ENCODE measurements at regions of chr2 and their contacts with region 1.

Region 1: DNA sequence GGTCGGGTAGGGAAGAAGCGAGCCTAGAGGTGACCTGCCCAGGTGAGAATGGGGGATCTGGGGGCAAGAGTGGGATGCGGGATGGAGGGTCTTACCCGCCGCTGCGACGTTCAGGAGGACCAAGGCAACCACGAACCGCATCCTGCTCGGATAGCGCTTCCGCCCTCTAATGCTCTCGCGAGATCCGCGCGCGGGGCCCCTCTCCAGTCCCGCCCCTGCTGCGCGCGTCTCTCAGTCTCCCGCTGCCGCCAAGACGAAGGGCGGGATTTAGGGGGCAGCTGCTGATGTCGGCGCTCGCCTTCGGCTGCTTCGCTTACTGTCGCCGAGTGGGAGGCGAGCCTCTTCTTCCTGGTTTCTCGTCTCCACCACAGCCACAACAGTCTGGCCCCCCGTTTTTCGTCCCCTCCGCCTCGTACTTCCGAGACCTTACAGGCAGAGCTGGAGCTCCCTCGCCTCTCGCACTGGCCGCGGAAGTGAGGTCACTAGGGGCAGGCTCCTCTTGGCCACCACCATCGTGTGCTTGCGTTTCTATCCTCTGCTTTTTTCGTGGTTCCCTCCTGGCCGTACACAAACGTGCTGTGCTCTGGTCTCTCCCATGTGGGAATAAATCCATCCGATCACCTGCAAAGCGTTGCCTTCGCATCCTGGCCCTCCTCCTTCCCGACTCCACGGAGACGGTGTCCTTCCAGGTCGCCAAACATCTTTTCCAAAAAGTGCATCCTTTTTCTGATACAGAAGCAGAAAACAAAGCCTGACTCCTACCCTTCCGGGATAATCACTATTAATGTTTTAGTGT is at the start of gene TGOLN2:
- DNase-seq: peak; percentile 95
- H3K4me3 Mint-ChIP-seq: peak within 1 kb of the TSS; percentile 98
- H3K27ac Mint-ChIP-seq: peak within 1 kb of the TSS; percentile 99
- H3K4me1 Mint-ChIP-seq: peaks cover 40% of the 10 kb centered on the region
- H3K27me3 Mint-ChIP-seq: no peaks in the 10 kb centered on the region
- total RNA-seq, gene TGOLN2: 84.8 to 85.9 TPM

Region 2: GRCh38 chr2:84939426-84940087 is 388.5 kb before region 1 on chr2:
- CTCF ChIA-PET with region 1: no interaction called
- POLR2A ChIA-PET with region 1: interaction called, 12 read pairs
- intact Hi-C with region 1: loop called (anchors 2 kb)
- DNase-seq: peak; percentile 87
- H3K4me3 Mint-ChIP-seq: peak overlapping the region; percentile 62
- H3K27ac Mint-ChIP-seq: peak overlapping the region; percentile 93
- H3K4me1 Mint-ChIP-seq: peaks cover 66% of the 10 kb centered on the region
- H3K27me3 Mint-ChIP-seq: no peaks in the 10 kb centered on the region

Region 3: GRCh38 chr2:85278361-85278760 is 49.7 kb before region 1 on chr2:
- CTCF ChIA-PET with region 1: no interaction called
- POLR2A ChIA-PET with region 1: no interaction called
- intact Hi-C with region 1: no loop called
- DNase-seq: no peak
- H3K4me3 Mint-ChIP-seq: no peak overlapping the region
- H3K27ac Mint-ChIP-seq: no peak overlapping the region
- H3K4me1 Mint-ChIP-seq: no peaks in the 10 kb centered on the region
- H3K27me3 Mint-ChIP-seq: no peaks in the 10 kb centered on the region

Region 4: GRCh38 chr2:85308896-85309555 is 19.0 kb before region 1 on chr2:
- CTCF ChIA-PET with region 1: no interaction called
- POLR2A ChIA-PET with region 1: interaction called, 11 read pairs
- intact Hi-C with region 1: loop called (anchors 2 kb)
- DNase-seq: no peak
- H3K4me3 Mint-ChIP-seq: peak overlapping the region; percentile 60
- H3K27ac Mint-ChIP-seq: peak overlapping the region; percentile 38
- H3K4me1 Mint-ChIP-seq: peaks cover 31% of the 10 kb centered on the region
- H3K27me3 Mint-ChIP-seq: no peaks in the 10 kb centered on the region

Region 5: DNA sequence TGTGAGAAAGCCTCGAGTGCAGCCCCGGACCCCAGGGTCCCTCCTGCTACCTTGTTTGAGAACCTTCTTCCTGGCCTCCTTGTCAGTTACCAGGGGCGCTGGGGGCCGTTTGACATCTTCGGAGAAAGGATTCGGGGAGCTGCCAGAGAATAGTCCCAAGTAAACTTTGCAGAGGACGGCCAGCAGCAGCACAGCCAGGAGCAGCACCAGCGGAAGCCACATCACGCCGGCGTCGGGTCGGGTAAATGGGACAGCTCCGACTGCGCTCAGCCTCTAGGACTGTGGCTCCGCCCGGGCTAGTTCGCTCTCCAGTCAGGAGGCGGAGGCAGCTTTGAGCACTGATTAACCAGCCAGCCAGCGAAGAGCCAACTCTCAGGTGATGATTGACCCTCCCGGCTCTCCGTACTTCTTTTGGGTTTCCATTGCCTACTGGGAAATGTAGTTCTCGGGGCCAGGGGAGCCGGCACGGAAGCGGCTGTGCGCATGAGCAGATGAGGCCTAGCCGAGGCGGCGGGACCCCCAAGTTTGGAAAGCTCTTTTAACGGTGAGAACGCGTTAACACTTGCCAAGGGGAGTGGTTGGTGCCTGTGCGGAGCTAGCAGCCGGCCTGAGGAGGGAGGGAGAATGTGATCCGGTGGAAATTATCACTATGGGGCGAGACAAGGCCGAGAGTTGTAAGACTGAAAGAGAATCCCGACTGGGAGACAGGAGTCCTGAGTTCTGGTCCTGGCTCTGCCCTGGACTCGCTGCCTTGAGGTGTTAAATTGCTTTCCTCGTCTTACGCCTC is 26.5 kb after region 1 on chr2 and contains the starts of genes ELMOD3 and RETSAT:
- CTCF ChIA-PET with region 1: interaction called, 5 read pairs
- POLR2A ChIA-PET with region 1: interaction called, 42 read pairs
- intact Hi-C with region 1: loop called (anchors 1 kb)
- DNase-seq: peak; percentile 98
- H3K4me3 Mint-ChIP-seq: peak within 1 kb of the TSS; percentile 100
- H3K27ac Mint-ChIP-seq: peak within 1 kb of the TSS; percentile 95
- H3K4me1 Mint-ChIP-seq: peaks cover 41% of the 10 kb centered on the region
- H3K27me3 Mint-ChIP-seq: no peaks in the 10 kb centered on the region
- total RNA-seq, gene ELMOD3: 11.1 to 15.0 TPM
- total RNA-seq, gene RETSAT: 22.6 to 22.8 TPM

Region 6: DNA sequence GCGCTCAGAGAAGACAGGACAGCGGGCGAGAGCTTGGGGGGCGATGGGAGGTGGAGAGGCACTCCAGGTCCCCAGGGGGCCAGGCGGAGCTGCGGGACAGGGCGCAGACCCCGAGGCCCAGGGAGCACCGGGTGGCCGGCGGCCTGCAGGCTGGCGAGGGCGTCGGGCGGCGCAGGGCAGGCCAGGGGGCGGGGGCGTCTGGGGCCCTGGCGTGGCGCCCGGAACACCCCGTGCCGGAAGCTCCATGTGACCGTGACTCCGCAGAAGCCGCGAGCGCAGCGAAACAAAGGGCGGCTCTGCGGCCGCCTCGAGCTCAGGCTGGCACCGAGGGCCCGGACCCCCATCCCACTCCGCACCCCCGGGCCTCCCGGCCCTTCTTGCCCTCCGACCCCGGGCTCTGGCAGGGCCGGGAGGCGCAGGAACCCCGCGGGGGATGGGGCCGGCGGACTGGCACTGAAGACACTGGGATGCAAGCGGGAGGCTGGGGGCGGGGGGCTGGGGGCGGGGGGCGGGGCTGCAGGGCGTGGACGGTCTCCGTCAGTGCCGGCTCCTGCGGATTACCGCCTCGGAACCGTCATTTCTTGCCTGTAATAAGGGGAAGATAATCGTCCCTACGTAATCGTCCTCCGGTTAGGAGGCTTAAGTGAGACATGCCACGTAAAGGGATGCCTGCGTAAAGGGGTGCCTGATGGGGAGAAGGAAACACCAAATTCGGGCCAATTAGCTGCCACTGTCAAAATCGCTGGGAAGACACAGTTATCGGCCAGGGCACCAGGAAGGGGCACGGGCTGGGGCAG is 109.7 kb after region 1 on chr2:
- CTCF ChIA-PET with region 1: no interaction called
- POLR2A ChIA-PET with region 1: interaction called, 14 read pairs
- intact Hi-C with region 1: no loop called
- DNase-seq: peak; percentile 86
- H3K4me3 Mint-ChIP-seq: peak overlapping the region; percentile 81
- H3K27ac Mint-ChIP-seq: peak overlapping the region; percentile 98
- H3K4me1 Mint-ChIP-seq: peaks cover 27% of the 10 kb centered on the region
- H3K27me3 Mint-ChIP-seq: no peaks in the 10 kb centered on the region

Region 7: DNA sequence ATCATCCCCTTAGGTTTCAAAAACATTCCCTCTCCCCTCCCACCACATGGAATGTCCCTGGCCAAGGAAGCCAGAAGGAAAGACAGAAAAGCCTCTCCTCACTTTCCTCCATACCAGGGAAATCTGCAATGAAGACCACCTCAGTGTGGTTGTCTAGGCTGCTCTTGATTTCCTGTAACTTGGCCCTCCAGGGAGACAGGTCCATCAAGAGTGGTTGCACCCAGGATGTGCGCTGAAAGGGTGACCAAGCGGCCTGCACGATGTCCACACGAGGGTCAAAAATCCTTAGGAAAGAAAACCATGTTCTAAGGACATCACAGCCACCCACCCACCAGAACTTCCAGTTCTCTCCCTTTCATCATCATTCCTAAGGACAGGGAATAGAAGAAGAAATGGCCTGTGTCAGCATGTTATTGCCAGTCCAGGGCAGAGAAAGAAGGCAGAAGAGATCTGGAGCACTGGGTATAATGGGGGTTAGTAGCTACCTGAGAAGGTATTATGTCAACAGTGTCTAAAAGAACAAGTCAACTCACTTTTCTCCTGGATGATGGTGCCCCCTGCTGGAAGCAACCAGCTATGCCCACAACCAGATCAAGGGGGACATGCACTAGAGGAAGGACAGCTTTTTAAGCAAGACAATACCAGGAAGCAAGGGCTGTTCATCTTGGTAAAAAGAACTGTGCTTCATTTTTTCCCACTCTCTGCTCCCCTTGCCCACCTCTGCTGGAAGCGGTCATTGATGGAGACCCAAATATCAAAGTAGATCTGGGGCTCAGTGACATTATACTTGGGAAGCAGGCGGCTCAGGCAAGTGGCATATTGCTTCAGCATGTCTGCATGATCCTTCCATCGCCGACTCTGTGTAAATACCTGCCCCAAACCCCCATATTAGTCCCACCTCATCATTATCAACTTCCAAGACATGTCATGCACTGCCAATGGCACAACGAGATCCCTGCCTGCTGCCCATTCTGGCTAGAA is 224.0 kb after region 1 on chr2:
- CTCF ChIA-PET with region 1: interaction called, 16 read pairs
- POLR2A ChIA-PET with region 1: interaction called, 7 read pairs
- intact Hi-C with region 1: no loop called
- DNase-seq: peak; percentile 91
- H3K4me3 Mint-ChIP-seq: no peak overlapping the region
- H3K27ac Mint-ChIP-seq: no peak overlapping the region
- H3K4me1 Mint-ChIP-seq: peaks cover 3% of the 10 kb centered on the region
- H3K27me3 Mint-ChIP-seq: no peaks in the 10 kb centered on the region

Measured in activated CD4-positive, alpha-beta memory T cell treated with anti-CD3 and anti-CD28 coated beads for 36 hours (primary cell).